HEK293T (cell line): ENCODE measurements at regions of chr9 and their contacts with region 1.

Region 1: DNA sequence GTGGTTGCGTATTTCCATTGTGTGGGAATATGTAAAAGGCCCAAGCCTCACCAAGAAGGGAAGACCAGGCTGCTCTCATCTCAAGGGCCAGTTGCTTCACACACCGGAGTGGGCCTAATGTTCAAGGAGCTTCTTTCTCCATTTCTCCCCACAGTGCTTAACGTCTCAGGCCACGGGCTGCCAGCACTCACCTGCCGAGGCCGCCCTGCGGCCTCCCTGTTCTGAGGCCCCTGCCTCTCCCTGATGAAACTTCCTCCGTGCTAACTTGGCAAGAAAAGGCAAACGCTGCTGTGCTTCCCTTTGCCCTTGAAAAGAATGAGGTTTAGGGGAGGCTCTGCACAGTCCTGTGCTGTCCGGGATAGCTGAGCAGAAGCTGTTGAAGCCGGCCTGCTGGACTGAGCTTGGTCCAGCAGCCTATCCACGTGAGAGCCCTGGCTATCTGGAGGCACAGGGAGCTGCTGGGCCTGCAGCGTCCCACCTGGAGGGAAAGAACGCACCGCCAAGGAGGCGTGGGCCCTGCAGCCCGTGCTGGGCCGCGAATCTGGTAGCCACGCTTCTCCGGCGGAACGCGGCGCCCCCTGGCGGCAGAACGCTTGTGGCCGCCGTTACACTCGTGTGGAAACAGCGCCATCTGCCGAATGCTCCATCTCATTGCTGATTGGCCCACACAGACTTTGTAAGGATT is 73.5 kb upstream of the PRSS3 start:
- DNase-seq: peak; percentile 72

Region 2: DNA sequence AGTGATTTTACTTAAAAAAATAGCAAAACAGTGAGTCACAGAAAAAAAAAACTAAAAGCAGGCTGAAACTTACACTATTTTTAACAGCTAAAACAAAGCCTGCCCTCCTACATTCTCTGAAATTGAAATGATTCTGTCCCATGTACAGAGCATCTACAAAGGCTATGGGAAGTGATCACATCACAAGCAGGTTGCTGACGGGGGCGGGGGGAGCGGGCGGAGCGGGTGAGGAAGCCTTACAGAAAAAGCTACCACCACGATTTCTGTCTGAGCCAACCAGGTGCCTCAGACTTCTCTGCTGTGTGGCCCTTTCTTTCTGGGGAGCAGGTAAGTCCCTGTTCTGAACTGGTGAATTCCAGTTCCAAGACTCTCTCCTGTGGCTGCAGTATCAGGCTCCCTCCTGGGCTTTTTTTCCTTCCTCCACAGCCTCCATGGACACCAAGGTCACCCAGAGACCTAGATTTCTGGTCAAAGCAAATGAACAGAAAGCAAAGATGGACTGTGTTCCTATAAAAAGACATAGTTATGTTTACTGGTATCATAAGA is 92.9 kb before region 1 on chr9:
- CTCF ChIA-PET with region 1: interaction called, 37 read pairs
- POLR2A ChIA-PET with region 1: interaction called, 4 read pairs
- DNase-seq: no peak